Left colon (tissue), 2 donors: ENCODE measurements at regions of chr12 and their contacts with region 1.

Region 1: DNA sequence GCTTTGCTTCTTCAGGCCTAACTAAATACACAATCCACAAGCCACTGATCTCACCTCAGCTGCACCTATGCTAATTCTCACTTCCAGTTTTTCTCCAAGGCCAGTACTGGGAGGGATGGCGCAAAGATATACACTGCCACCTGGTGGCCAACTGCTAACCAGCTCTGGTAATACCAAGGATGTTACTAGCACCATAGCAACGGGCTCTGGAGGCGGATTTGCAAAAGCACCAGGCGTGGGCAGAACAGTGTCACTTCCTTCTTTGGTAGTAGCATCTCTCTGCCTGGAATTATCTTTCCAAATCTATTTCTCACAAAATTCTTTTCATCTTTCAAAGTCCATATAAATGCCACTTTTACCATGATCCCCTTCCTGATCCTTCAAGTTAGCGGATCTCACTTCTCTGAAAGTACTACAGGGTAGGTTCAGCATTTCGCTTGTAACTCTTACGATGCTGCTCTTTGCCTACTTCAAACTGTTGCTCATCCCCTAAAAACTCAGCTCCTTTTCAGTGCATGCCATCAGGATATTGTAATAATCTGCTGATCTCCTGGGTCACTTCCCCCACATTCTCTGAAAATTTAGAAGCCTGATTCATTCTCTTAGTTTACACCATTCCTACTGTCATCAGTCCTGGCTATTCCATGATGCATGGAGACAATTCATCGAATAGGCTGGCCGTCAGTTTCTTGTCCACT is 37.1 kb upstream of the FOXJ2 start:
- DNase-seq: peak; percentile 72 to 76
- ATAC-seq: peak; percentile 96

Region 2: DNA sequence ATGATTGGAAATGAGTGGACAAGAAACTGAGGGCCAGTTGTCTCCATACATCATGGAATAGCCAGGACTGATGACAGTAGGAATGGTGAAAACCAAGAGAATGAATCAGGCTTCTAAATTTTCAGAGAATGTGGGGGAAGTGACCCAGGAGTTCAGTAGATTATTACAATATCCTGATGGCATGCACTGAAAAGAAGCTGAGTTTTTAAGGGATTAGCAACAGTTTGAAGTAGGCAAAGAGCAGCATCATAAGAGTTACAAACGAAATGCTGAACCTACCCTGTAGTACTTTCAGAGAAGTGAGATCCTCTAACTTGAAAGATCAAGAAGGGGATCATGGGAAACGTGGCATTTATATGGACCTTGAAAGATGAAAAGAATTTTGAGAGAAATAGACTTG is 135.9 kb before region 1 on chr12:
- intact Hi-C with region 1: loop called (anchors 5 to 10 kb)
- DNase-seq: no peak
- ATAC-seq: no peak

Region 3: DNA sequence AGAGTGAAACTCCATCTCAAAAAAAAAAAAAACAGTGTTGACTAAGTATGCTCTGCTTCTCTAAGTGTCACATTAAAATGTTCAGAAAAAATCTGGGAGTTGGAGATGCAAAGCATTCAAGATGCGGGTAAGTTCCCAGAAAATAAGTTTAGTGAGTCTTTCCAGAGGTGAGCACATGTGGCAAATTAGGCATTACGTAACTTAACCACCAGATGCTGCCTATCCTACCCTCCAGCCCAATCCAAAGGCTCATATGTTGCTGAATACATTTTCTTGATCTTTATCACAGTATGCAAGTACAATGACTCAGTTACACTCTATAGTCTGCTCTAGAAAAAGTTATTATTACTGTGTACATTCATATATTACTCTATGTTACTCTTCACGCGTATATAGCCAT is 126.3 kb before region 1 on chr12:
- intact Hi-C with region 1: loop called in 1 of 2 experiments (anchors 10 kb)
- DNase-seq: no peak
- ATAC-seq: no peak

Region 4: GRCh38 chr12:7933255-7933729 is 62.1 kb before region 1 on chr12:
- intact Hi-C with region 1: loop called (anchors 5 to 10 kb)
- DNase-seq: peak; percentile 55 to 65
- ATAC-seq: peak; percentile 72